ENCODE measurements at regions of chr17 and their contacts with region 1.

Region 1: DNA sequence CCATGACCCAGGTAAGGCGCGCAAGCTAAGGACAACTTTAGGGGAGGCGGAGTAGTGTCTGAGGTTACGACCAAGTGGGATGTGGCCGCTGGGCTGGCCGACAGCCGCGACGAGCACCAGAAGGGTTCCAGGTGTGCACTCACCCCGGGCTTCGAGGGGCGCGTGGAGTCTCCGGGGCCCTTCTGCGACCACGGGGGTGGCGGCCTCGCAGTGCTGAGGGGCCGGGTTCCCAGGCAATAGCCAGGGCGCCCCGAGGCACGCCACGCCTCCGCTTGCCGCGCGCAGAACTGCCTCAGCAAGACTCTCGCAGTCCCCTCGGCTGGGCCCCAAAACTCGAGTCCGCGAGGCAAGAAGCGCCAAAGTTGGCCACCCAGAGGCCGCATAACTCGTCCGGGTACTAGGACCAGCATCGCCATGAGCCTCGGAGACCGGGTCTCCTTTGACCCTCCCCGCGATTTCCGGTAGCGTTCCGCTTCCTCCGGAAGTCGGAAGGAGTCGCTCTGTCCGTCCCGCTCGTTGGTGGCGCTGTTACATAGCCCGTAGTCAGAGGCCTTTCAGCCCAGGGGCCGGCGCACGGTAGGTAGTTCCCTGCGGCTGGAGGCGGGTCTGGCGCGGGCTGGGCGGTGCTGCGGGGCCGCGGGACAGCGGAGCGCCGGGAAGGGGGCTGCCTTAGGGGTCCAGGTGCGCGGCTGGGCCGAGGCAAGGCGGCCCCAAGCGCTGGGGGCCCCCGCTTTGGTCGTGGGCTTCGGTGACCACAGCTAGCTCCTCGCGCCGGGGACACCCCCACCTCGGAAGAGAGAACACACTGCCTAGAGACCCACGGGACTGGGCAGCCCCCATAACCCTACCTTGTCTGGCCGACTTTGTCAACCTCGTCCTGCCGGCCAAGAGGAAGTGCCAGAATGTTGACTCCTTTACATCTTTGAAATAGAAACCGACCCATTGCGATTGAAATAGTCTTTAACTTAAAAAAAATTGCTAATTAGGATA is at the starts of genes ADPRM and SCO1:
- DNase-seq: peak; percentile 94
- H3K4me3 Mint-ChIP-seq: peak within 1 kb of the TSS; percentile 92
- H3K27ac Mint-ChIP-seq: peak within 1 kb of the TSS; percentile 93
- H3K4me1 Mint-ChIP-seq: peaks cover 52% of the 10 kb centered on the region
- H3K27me3 Mint-ChIP-seq: no peaks in the 10 kb centered on the region
- total RNA-seq, gene ADPRM: 12.4 to 13.5 TPM
- total RNA-seq, gene SCO1: 34.6 to 36.4 TPM

Region 2: DNA sequence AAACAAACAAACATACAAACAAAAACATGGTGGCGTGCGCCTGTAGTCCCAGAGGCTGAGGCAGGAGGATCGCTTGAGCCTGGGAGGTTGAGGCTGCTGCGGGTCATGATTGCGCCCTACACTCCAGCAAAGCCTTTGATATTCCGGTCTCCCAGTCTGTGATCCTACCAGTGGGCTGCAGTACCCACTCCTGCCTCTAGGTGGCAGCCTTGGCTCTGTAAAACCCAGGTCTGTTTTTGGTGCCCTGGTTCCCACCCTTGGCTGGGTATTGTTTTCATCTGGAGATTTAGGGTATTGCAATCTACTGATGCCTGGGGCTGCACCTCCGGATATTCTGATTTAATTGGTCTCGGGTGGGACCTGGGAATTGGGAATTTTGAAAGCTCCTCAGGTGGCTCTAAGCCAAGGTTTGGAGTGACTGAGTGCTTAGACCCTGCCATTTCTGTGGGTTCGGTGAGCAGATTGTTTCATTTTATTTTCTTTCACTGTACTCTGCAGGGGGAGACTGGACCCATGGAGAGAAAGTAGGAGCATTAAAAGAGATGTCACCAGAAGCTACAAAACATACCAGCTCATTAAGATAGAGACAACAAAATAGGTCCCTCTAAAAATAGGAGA is 80.8 kb before region 1 on chr17:
- CTCF ChIA-PET with region 1: no interaction called
- POLR2A ChIA-PET with region 1: no interaction called
- intact Hi-C with region 1: no loop called
- DNase-seq: peak; percentile 77
- H3K4me3 Mint-ChIP-seq: no peak overlapping the region
- H3K27ac Mint-ChIP-seq: no peak overlapping the region
- H3K4me1 Mint-ChIP-seq: no peaks in the 10 kb centered on the region
- H3K27me3 Mint-ChIP-seq: peaks cover 3% of the 10 kb centered on the region

Region 3: DNA sequence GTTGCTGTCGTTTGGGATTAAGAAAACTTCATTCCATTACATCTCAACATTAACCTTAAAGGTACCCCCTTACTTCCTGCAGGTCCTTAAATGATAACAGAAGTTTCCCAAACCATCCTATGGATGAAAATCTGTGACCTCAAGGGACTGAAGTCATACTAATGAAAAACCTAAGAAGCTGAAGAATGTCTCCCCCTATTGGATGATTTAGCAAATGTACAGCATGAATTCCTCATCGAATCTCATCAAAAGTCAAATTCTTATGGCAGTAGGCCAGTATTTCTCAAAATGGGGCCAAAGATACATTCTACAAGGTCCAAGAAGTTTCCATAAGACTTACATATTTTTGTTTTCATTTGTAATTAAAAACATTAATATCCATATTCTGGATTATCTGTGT is 13.5 kb before region 1 on chr17:
- CTCF ChIA-PET with region 1: interaction called, 11 read pairs
- POLR2A ChIA-PET with region 1: no interaction called
- intact Hi-C with region 1: no loop called
- DNase-seq: no peak
- H3K4me3 Mint-ChIP-seq: no peak overlapping the region
- H3K27ac Mint-ChIP-seq: no peak overlapping the region
- H3K4me1 Mint-ChIP-seq: peaks cover 5% of the 10 kb centered on the region
- H3K27me3 Mint-ChIP-seq: no peaks in the 10 kb centered on the region

Region 4: DNA sequence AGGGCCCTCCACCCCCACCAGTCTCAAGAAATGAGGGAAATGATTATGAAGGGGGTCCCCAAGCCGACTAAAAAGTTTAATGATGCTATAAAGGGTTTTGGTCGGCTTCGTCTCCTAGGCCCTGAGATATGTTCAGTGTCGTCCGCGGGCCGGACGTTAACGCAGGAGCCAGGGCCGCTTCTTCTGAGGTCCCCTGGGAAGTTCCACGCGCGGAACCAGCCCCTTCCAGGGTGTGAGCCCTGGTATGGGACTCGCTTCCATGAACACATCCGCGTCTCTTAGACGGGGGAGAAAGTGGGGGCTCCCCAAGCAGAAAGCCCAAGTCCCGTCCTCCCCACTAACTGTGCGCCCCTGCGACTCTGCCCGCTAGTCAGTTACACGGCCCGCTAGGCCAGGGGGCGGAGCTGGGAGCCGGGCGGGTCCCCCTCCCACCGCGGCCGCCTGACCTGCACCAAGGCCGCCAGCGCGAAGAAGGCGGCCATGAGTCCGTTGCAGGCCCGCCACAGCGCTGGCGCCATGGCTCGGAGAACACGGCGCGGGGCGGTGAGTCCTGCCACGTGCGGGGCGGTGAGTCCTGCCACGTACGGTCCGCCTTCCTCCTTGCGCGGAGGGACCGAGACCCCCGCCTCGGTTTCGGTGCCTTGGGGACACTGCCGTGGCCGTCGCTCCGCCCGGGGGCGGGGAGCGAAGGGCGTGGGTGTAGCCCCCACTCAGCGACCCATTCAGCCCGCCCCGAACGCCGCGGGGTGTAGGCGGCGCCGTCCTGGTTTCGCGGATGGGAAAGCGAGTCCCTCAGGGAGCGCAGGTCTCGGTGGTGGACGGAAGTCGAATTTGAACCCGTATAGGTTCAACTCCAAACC is 32.2 kb after region 1 on chr17 and contains the start of gene TMEM220:
- CTCF ChIA-PET with region 1: interaction called, 3 read pairs
- POLR2A ChIA-PET with region 1: no interaction called
- intact Hi-C with region 1: loop called (anchors 1 kb)
- DNase-seq: peak; percentile 42
- H3K4me3 Mint-ChIP-seq: peak within 1 kb of the TSS; percentile 78
- H3K27ac Mint-ChIP-seq: peak within 1 kb of the TSS; percentile 42
- H3K4me1 Mint-ChIP-seq: peaks cover 20% of the 10 kb centered on the region
- H3K27me3 Mint-ChIP-seq: peaks cover 3% of the 10 kb centered on the region
- total RNA-seq, gene TMEM220: 0.24 to 0.94 TPM

Region 5: GRCh38 chr17:10743316-10744009 is 46.1 kb after region 1 on chr17:
- CTCF ChIA-PET with region 1: no interaction called
- POLR2A ChIA-PET with region 1: no interaction called
- intact Hi-C with region 1: no loop called
- DNase-seq: no peak
- H3K4me3 Mint-ChIP-seq: no peak overlapping the region
- H3K27ac Mint-ChIP-seq: no peak overlapping the region
- H3K4me1 Mint-ChIP-seq: peaks cover 5% of the 10 kb centered on the region
- H3K27me3 Mint-ChIP-seq: no peaks in the 10 kb centered on the region